ENCODE measurements at regions of chr3 and their contacts with region 1.

Region 1: DNA sequence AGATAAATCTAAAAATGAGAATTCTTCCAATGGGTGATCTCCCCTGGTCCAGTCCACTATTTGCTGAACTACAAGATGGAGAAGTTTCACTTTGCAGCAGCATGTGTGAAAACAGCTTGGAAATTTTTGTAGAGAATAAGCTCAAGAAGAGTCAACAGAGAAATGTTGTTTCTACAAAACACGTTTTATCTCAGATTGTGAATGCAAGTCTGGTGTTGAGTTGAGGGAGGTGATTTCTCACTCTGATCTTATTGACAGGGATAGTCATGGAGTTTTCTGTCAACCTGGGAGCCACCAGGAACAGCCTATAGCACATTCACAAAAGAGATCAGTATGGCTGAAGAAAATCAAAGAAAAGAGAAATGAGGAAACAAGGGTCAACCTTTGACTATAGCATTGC is 981.2 kb upstream of the CFAP20DC start:
- DNase-seq: no peak
- H3K4me3 Mint-ChIP-seq: peak overlapping the region; percentile 6
- H3K27ac Mint-ChIP-seq: peak overlapping the region; percentile 90
- H3K4me1 Mint-ChIP-seq: peaks cover 77% of the 10 kb centered on the region
- H3K27me3 Mint-ChIP-seq: no peaks in the 10 kb centered on the region

Region 2: GRCh38 chr3:59963676-59964075 is 67.3 kb before region 1 on chr3:
- CTCF ChIA-PET with region 1: no interaction called
- intact Hi-C with region 1: no loop called
- DNase-seq: no peak
- H3K4me3 Mint-ChIP-seq: no peak overlapping the region
- H3K27ac Mint-ChIP-seq: no peak overlapping the region
- H3K4me1 Mint-ChIP-seq: peaks cover 44% of the 10 kb centered on the region
- H3K27me3 Mint-ChIP-seq: no peaks in the 10 kb centered on the region

Region 3: DNA sequence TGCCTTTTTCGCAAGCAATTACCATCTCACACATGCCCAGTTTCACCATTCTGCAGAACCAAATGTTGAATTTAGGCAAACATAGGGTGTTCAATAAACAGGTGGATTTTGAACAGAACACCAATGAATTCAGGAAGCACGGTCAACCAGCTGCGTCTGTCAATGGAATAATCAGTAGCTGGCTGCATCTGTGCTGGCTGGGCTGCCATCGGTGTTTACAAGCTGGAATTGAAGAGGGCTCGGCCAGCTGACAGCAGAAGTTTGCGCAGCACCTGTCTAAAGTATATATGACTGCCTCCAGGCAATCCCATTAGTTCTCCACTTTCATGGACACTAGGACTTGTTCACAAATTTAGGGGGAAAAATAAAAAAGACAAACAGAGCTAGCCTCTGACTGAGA is 15.2 kb after region 1 on chr3:
- CTCF ChIA-PET with region 1: interaction called, 7 read pairs
- intact Hi-C with region 1: loop called (anchors 1 kb)
- DNase-seq: no peak
- H3K4me3 Mint-ChIP-seq: no peak overlapping the region
- H3K27ac Mint-ChIP-seq: peak overlapping the region; percentile 91
- H3K4me1 Mint-ChIP-seq: peaks cover 80% of the 10 kb centered on the region
- H3K27me3 Mint-ChIP-seq: no peaks in the 10 kb centered on the region

Measured in activated naive CD4-positive, alpha-beta T cell treated with anti-CD3 and anti-CD28 coated beads for 36 hours (primary cell).